Aorta (tissue), 5 donors: ENCODE measurements at regions of chr7 and their contacts with region 1.

Region 1: DNA sequence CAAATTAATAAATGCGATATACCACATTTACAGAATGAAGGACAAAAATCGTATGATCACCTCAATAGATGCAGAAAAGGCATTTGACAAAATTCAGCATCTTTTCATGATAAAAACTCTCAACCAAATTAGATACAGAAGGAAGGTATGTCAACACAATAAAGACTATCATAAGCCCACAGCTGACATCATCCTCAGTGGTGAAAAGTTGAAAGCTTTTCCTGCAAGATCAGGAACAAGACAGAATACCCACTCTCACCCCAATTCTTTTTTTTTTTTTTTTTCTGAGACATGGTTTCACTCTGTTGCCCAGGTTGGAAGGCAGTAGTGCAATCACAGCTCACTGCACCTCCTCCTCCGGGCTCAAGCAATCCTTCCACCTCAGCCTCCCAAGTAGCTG is 67.2 kb downstream of the TPST1 start:
- DNase-seq: no peak
- ATAC-seq: no peak
- H3K4me3 ChIP-seq: no peak overlapping the region
- H3K27ac ChIP-seq: no peak overlapping the region
- H3K4me1 ChIP-seq: no peaks in the 10 kb centered on the region
- H3K27me3 ChIP-seq: no peaks in the 10 kb centered on the region

Region 2: DNA sequence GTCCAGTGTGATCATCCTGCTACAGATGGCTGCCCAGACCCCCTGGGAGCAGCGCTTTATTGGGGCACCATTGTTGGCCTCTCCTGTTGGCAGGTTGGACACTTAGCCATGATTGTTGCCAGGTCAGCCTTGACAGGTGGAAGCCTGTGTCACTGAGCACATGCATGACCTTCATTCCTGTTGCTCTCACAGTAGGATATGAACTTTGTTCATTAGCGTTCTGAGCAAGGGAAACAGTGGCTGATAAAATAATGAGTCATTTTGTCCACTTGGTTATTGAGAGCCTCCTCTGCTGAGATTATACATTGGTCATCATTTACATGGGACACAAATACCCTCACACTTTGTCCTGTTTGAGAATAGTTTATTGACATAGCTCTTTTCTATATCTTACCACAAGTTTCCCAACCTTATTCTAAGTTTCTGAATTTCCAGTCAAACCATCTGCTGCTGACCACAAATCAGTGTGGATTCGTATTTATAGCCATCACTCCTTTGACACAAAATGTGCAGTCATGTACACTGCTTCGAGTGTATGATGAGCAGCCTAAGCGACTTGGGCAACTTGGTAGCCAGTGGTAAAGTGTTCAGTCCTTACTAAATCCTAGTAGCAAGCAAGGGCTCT is 35.4 kb after region 1 on chr7:
- intact Hi-C with region 1: loop called in 1 of 2 experiments (anchors 2 kb)
- DNase-seq: no peak
- ATAC-seq: no peak
- H3K4me3 ChIP-seq: no peak overlapping the region
- H3K27ac ChIP-seq: no peak overlapping the region
- H3K4me1 ChIP-seq: no peaks in the 10 kb centered on the region
- H3K27me3 ChIP-seq: no peaks in the 10 kb centered on the region